Right cardiac atrium (tissue), 5 donors: ENCODE measurements at regions of chr3 and their contacts with region 1.

Region 1: DNA sequence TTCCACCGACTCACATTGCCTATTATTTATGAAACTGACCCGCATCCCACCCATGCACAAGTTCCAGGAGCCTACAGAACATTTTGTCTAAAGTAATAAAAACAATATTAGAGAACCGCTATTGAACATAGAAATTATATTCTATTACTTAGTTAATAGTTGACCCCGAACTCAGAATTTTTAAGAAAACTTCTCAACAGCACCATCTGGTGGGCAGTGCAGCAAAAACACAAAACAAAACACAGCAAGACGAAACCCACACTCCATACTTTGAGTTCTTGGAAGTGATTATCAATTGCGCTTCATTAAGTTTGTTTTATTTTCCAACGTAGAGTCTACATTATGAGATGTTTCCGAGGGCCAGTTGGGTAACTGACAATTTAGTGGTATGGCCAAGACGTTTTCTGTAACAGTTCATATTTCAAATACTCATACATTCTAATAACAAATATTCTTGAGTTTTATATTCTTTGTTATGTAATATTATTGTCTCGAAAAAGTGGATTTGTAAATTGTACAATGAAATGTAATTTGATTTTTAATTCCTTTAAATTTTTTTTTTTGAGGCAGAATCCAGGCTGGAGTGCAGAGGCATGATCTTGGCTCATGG is 24.0 kb upstream of the C3orf70 start:
- DNase-seq: peak in 2 of 3 donors; percentile 16 to 56
- ATAC-seq: no peak
- H3K4me3 ChIP-seq: no peak overlapping the region
- H3K27ac ChIP-seq: no peak overlapping the region
- H3K4me1 ChIP-seq: no peaks in the 10 kb centered on the region
- H3K27me3 ChIP-seq: no peaks in the 10 kb centered on the region

Region 2: DNA sequence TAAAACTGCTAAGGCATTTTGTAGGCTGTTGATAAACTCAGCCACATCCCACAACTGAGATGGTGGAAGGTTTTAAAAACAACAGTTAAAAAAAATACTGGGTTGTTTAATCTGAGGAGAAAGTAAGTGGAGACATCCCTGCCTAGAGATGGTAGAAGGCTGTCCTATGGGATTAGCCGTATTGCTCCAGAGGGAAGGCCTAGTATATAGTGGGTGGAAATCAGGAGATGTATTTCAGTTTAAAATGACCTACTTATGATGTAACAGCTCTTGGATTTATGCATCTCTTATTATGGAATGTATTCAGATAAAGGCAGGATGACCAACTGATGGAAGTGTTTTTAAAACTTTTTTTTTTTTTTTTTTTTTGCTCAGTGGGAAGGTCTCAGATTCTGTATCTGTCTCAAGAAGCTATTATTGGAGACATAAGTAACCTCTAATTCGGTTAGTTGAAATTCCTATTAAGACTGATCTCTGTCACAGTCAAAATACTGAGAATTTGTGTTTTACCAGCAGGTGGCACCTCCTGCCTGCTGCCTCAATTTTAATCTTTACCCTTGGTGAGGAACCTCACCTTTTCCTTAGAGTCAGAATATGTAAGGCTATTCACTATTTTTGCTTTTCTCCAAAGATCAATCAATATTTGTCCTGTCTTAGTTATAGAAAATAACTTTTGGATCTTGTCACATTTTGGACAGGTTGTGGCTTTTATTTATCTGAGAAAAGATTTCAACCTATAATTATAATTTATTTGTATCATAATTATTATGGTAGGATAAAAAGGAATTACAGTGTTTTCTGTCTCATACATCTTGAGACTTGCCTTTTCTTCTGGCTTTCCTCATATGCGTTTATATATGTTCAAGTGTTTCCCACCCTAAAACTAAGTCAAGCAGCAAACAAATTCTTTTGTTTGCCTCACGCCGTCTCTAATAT is 301.9 kb before region 1 on chr3:
- intact Hi-C with region 1: loop called in 3 of 4 experiments (anchors 5 kb)
- DNase-seq: no peak
- ATAC-seq: no peak
- H3K4me3 ChIP-seq: no peak overlapping the region
- H3K27ac ChIP-seq: no peak overlapping the region
- H3K4me1 ChIP-seq: no peaks in the 10 kb centered on the region
- H3K27me3 ChIP-seq: no peaks in the 10 kb centered on the region

Region 3: GRCh38 chr3:185021256-185021655 is 155.6 kb before region 1 on chr3:
- intact Hi-C with region 1: no loop called
- DNase-seq: no peak
- ATAC-seq: no peak
- H3K4me3 ChIP-seq: no peak overlapping the region
- H3K27ac ChIP-seq: no peak overlapping the region
- H3K4me1 ChIP-seq: peaks cover 3% of the 10 kb centered on the region
- H3K27me3 ChIP-seq: no peaks in the 10 kb centered on the region